ENCODE measurements at regions of chr5 and their contacts with region 1.

Region 1: DNA sequence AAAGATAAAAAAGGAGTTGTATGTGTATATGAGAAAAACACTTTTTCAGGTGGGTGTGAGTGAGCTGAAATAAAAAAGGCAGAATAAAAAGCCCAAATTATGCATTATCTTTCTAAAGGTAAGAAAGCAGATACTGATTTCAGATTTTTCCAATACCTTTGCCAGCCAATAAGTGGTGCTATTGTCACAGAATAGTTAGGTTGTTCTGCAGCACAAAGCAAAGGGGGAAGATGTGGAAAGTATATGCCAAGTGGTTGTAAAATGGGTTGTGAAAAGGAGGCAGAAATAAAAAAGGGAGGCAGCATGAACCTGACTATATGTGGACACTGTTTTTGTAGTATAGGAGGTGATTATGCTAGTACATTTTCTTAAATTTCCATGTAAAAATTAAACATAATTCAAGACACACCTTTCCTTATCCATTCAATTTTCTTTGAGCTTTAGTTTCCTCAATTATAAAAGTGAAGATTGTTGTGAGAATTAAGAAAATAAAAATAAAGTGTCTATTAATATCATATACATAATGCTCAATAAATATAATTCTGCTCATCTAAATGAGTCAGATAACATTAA is 106.7 kb downstream of the SMIM15 start:
- DNase-seq: peak; percentile 41
- H3K4me3 ChIP-seq: no peak overlapping the region; a peak in 1 of 4 replicates
- H3K27ac ChIP-seq: no peak overlapping the region
- H3K4me1 ChIP-seq: peaks cover 0 to 17% of the 10 kb centered on the region in 2 experiments; a peak in 2 of 4 replicates
- H3K27me3 ChIP-seq: no peaks in the 10 kb centered on the region
- CTCF ChIP-seq: peak; percentile 71
- EP300 ChIP-seq: no peak
- RAD21 ChIP-seq: peak; percentile 90

Region 2: GRCh38 chr5:60960591-60960990 is 94.9 kb before region 1 on chr5:
- CTCF ChIA-PET with region 1: interaction called, 14 read pairs
- POLR2A ChIA-PET with region 1: no interaction called
- DNase-seq: peak; percentile 23
- H3K4me3 ChIP-seq: no peak overlapping the region
- H3K27ac ChIP-seq: no peak overlapping the region
- H3K4me1 ChIP-seq: peaks cover 6 to 7% of the 10 kb centered on the region in 2 experiments; a peak in 3 of 4 replicates
- H3K27me3 ChIP-seq: no peaks in the 10 kb centered on the region
- CTCF ChIP-seq: peak; percentile 67
- EP300 ChIP-seq: no peak
- RAD21 ChIP-seq: peak; percentile 54

Region 3: GRCh38 chr5:61030163-61030482 is 25.4 kb before region 1 on chr5:
- CTCF ChIA-PET with region 1: no interaction called
- POLR2A ChIA-PET with region 1: no interaction called
- DNase-seq: peak; percentile 48
- H3K4me3 ChIP-seq: no peak overlapping the region
- H3K27ac ChIP-seq: peak overlapping the region; percentile 0 to 95; a peak in 2 of 4 replicates
- H3K4me1 ChIP-seq: peaks cover 0 to 23% of the 10 kb centered on the region in 2 experiments; a peak in 3 of 4 replicates
- H3K27me3 ChIP-seq: no peaks in the 10 kb centered on the region
- CTCF ChIP-seq: no peak
- EP300 ChIP-seq: peak in 1 of 2 experiments; percentile 90; a peak in 2 of 4 replicates
- RAD21 ChIP-seq: peak; percentile 22; the same call in 1 of the 2 replicates

Region 4: DNA sequence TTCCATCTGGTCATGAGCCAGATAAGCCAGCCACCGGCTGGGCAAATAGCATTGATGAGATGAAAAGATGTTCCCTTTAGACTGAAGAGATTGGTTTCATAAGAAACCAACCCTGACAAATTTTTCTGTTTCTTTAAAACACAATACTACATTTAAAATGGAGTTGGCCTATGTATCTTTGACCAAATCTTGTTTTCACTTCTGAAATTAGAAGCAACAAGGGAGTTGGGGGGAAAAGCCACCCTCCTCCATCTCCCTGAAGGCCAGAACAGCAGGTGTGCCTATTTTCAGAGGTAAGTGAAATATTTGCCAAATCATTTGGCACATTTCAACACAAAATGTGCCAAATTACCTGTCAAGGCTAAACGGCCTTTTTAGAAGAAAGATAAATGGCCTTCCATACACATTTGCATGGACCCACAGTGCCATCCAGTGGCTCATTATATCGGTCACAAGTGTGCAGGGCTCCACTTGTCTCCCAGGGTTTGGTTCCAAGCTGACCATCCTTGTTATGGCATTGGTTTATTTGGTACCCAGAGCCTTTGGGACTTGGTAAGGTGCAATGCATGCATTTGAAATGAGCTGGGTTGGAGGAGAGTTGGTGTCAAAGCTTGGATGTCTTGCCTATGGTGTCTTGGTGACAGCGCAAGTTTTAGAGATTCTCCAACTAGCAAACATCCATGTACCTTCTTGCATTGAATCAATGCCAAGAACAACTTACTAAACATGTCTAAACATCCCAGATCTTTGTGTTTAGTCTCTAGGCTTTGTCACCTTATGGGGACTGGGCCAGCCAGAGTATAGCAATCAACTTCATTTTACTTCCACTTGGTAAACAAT is 878.5 kb after region 1 on chr5:
- CTCF ChIA-PET with region 1: interaction called, 12 read pairs
- POLR2A ChIA-PET with region 1: no interaction called
- DNase-seq: peak; percentile 62
- H3K4me3 ChIP-seq: peak overlapping the region in 1 of 2 experiments; percentile 6; a peak in 2 of 4 replicates
- H3K27ac ChIP-seq: no peak overlapping the region
- H3K4me1 ChIP-seq: no peaks in the 10 kb centered on the region; a peak in 1 of 4 replicates
- H3K27me3 ChIP-seq: no peaks in the 10 kb centered on the region
- CTCF ChIP-seq: peak; percentile 65
- EP300 ChIP-seq: no peak
- RAD21 ChIP-seq: peak; percentile 94

Measured in SK-N-SH (cell line).